HEK293T (cell line): ENCODE measurements at regions of chrX and their contacts with region 1.

Region 1: DNA sequence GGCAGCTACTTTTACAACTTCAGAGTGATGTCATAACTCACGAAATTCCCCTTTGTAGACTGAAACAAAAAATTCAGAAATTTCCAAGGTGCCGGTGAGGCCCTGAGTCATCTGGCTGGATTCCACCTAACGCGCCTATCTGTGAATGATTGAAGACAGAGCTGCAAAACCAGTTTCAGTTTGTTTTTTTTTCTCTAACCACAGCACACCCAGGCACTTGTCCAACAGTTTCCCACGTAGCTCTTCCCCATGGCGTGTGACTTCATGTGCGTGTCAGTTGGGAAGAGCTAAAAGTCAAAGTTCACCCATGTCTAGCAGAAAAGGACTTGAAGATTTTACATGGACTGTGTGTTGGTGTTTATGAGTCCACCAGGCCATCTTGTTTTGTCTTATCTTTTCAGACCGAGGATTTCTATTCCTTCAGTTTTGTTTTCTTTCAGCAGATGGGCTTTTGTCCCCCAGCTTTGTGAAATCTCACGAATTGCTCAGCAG is 16.4 kb downstream of the TCEANC start:
- DNase-seq: no peak

Region 2: DNA sequence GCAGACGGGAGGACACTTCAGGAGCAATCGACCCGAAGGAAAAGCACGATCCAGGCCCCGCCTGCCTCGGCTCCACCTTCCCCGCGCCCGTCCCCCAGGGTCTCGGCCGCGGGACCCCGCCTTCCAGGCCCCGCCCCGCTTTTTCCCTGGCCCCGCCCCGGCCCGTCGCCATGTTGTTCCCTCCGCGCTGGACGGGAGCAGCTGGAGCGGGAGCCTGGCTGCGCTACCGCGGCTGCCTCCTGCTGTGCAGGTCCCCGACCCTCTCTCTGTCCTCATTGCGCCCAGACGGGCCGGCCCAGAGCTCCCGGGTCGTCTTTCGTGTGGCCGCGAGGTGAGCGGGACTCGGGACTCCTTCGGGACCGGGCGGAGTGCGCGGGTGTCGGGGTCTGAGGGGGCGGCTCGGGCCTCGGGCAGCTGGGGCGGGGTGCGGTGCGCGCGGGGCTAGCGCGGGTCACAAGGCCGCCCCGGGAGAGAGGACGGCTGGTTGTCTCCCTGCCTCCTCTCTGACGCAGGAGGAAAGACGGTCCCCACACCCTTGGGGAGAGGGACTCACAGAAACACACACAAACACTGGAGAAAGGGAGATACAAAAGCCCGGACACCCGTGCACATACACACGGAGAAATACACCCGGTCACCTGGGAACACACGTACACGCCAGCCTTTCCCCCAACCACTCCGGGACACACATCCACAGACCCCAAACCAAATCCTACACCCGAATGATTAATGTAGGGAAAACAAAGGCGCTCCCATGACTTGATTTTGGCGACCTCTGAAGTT is 19.9 kb after region 1 on chrX and contains the start of gene RAB9A:
- CTCF ChIA-PET with region 1: no interaction called
- POLR2A ChIA-PET with region 1: interaction called, 10 read pairs
- DNase-seq: peak; percentile 92